MCF 10A (cell line): ENCODE measurements at regions of chr3 and their contacts with region 1.

Region 1: GRCh38 chr3:98602078-98602678 is 8.8 kb upstream of the CPOX start:
- DNase-seq: peak; percentile 70
- H3K4me3 Mint-ChIP-seq: no peak overlapping the region
- H3K27ac Mint-ChIP-seq: no peak overlapping the region
- H3K4me1 Mint-ChIP-seq: no peaks in the 10 kb centered on the region
- H3K27me3 Mint-ChIP-seq: no peaks in the 10 kb centered on the region
- CTCF ChIP-seq: peak; percentile 77

Region 2: DNA sequence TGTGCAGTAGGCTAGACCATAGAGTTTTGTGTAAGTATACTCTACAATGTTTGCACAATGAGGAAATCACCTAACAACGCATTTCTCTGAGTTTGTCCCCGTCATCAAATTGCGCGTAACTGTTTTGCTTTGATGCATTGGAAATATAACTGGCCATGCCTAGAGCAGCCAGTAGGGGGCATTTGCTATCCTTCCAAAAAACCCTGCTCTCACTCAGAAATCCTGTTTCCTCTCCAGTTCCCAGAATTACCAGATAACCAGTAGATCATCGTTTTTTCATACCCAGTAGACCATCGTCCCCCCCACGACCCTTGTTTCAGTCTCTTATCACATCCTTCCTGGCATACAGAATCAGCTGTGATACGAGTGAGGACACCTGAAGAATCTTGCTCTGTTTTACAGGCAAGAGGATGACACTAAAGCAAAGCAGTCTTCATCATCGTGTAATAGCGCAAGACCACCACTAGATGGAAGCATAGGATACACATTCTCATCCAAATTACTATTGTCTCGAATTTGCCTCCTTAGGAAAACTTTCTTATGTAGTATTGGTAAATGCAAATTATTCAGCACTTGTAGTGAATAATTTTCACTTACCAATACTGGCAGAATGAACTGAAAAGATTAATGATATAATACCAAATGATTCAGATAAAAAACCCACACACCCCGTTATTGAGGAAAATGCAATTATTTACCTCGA is 562.7 kb before region 1 on chr3:
- CTCF ChIA-PET with region 1: interaction called, 12 read pairs
- POLR2A ChIA-PET with region 1: no interaction called
- intact Hi-C with region 1: no loop called
- DNase-seq: peak; percentile 86
- H3K4me3 Mint-ChIP-seq: peak overlapping the region; percentile 59
- H3K27ac Mint-ChIP-seq: no peak overlapping the region
- H3K4me1 Mint-ChIP-seq: no peaks in the 10 kb centered on the region
- H3K27me3 Mint-ChIP-seq: peaks cover 70% of the 10 kb centered on the region
- CTCF ChIP-seq: peak; percentile 79

Region 3: GRCh38 chr3:98406034-98406433 is 196.1 kb before region 1 on chr3:
- CTCF ChIA-PET with region 1: no interaction called
- POLR2A ChIA-PET with region 1: no interaction called
- intact Hi-C with region 1: no loop called
- DNase-seq: no peak
- H3K4me3 Mint-ChIP-seq: no peak overlapping the region
- H3K27ac Mint-ChIP-seq: no peak overlapping the region
- H3K4me1 Mint-ChIP-seq: no peaks in the 10 kb centered on the region
- H3K27me3 Mint-ChIP-seq: no peaks in the 10 kb centered on the region
- CTCF ChIP-seq: no peak

Region 4: DNA sequence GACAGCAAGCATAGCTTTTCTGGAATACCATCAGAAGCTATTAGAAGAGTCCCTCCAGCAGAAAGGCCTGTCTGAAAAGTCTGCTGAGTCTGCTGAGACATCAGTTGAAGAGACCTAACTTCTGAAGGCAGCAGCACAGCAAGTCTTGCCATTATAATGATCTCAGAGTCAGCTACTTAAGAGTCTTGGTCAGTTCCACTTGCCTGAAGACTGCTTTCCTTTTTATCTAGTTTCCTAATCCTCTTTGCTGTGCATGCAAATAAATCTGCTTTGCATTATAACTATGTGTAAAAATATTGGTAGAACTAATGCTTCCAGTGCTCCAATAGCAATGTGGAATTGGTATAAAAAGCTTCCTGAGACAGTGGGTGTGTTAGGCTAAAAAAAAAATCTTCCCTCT is 26.1 kb after region 1 on chr3:
- CTCF ChIA-PET with region 1: interaction called, 13 read pairs
- POLR2A ChIA-PET with region 1: no interaction called
- intact Hi-C with region 1: no loop called
- DNase-seq: no peak
- H3K4me3 Mint-ChIP-seq: no peak overlapping the region
- H3K27ac Mint-ChIP-seq: no peak overlapping the region
- H3K4me1 Mint-ChIP-seq: no peaks in the 10 kb centered on the region
- H3K27me3 Mint-ChIP-seq: no peaks in the 10 kb centered on the region
- CTCF ChIP-seq: no peak

Region 5: DNA sequence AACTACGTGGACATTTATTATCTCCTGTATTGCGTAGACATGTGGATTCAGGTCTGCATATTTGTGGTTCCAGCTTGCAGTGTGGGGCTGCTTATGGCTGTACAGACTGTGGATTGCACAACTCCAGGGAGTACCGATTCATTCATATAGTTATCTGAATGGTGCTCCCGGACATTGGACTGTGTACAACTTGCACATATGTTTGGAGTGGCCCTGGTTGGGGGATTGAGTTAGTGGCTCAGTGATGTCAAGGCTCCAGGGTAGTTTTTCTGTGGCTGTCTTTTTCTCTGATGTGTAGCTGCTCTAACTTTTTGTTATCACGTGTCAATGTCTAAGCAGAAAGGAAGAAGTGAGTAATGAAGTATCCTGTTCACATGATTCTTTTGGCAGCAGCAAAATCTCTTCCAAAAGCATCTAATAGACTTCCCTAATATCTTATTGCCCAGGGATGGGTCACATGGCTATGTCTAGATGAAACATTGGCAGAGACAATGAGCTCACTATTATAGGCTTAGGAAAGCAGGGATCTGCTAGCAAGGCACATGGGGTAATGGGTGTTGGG is 176.8 kb after region 1 on chr3:
- CTCF ChIA-PET with region 1: interaction called, 30 read pairs
- POLR2A ChIA-PET with region 1: no interaction called
- intact Hi-C with region 1: no loop called
- DNase-seq: peak; percentile 87
- H3K4me3 Mint-ChIP-seq: peak overlapping the region; percentile 53
- H3K27ac Mint-ChIP-seq: peak overlapping the region; percentile 43
- H3K4me1 Mint-ChIP-seq: peaks cover 42% of the 10 kb centered on the region
- H3K27me3 Mint-ChIP-seq: no peaks in the 10 kb centered on the region
- CTCF ChIP-seq: no peak

Region 6: GRCh38 chr3:98798820-98799219 is 196.6 kb after region 1 on chr3:
- CTCF ChIA-PET with region 1: interaction called, 25 read pairs
- POLR2A ChIA-PET with region 1: interaction called, 5 read pairs
- intact Hi-C with region 1: no loop called
- DNase-seq: no peak
- H3K4me3 Mint-ChIP-seq: no peak overlapping the region
- H3K27ac Mint-ChIP-seq: no peak overlapping the region
- H3K4me1 Mint-ChIP-seq: peaks cover 5% of the 10 kb centered on the region
- H3K27me3 Mint-ChIP-seq: no peaks in the 10 kb centered on the region
- CTCF ChIP-seq: no peak

Region 7: DNA sequence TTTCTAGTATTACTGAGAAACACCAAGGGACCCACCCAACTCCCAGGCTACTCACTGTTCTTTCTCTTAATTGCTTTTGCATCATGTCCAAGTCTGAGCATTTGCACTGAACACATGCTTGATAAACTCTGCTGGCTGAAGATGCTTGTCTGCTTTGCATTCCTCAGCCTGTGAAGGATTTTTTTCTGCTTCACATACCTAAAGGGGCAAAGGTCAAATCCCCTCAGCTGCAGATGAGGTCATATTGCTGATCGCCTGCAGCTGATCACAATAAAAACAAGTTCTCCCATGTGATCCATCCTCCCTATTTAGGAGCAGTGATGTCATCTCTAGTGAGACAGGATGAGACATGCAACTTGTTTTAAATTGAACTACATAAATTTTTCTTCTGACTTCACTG is 383.9 kb after region 1 on chr3:
- CTCF ChIA-PET with region 1: interaction called, 51 read pairs
- POLR2A ChIA-PET with region 1: no interaction called
- intact Hi-C with region 1: no loop called
- DNase-seq: peak; percentile 39
- H3K4me3 Mint-ChIP-seq: no peak overlapping the region
- H3K27ac Mint-ChIP-seq: peak overlapping the region; percentile 57
- H3K4me1 Mint-ChIP-seq: peaks cover 15% of the 10 kb centered on the region
- H3K27me3 Mint-ChIP-seq: no peaks in the 10 kb centered on the region
- CTCF ChIP-seq: no peak